Activated naive CD4-positive, alpha-beta T cell treated with anti-CD3 and anti-CD28 coated beads for 36 hours (primary cell): ENCODE measurements at regions of chr20 and their contacts with region 1.

Region 1: GRCh38 chr20:53547664-53548239 is 45.9 kb downstream of the ZNF217 start:
- DNase-seq: peak; percentile 70
- H3K4me3 Mint-ChIP-seq: no peak overlapping the region
- H3K27ac Mint-ChIP-seq: no peak overlapping the region
- H3K4me1 Mint-ChIP-seq: peaks cover 2% of the 10 kb centered on the region
- H3K27me3 Mint-ChIP-seq: no peaks in the 10 kb centered on the region

Region 2: DNA sequence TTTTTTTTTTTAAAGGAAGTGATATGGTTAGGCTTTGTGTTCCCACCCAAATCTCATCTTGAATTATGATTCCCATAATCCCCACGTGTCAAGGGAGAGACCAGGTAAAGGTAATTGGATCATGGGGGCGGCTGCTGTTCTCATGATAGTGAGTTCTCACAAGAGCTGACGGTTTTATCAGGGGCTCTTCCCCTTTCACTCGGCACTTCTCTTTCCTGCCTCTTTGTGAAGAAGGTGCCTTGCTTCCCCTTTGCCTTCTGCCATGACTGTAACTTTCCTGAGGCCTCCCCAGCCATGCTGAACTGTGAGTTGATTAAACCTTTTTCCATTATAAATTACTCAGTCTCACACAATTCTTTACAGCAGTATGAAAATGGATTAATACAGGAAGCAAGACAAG is 1420.4 kb before region 1 on chr20:
- CTCF ChIA-PET with region 1: no interaction called
- intact Hi-C with region 1: loop called (anchors 1 kb)
- DNase-seq: no peak
- H3K4me3 Mint-ChIP-seq: no peak overlapping the region
- H3K27ac Mint-ChIP-seq: no peak overlapping the region
- H3K4me1 Mint-ChIP-seq: no peaks in the 10 kb centered on the region
- H3K27me3 Mint-ChIP-seq: no peaks in the 10 kb centered on the region

Region 3: DNA sequence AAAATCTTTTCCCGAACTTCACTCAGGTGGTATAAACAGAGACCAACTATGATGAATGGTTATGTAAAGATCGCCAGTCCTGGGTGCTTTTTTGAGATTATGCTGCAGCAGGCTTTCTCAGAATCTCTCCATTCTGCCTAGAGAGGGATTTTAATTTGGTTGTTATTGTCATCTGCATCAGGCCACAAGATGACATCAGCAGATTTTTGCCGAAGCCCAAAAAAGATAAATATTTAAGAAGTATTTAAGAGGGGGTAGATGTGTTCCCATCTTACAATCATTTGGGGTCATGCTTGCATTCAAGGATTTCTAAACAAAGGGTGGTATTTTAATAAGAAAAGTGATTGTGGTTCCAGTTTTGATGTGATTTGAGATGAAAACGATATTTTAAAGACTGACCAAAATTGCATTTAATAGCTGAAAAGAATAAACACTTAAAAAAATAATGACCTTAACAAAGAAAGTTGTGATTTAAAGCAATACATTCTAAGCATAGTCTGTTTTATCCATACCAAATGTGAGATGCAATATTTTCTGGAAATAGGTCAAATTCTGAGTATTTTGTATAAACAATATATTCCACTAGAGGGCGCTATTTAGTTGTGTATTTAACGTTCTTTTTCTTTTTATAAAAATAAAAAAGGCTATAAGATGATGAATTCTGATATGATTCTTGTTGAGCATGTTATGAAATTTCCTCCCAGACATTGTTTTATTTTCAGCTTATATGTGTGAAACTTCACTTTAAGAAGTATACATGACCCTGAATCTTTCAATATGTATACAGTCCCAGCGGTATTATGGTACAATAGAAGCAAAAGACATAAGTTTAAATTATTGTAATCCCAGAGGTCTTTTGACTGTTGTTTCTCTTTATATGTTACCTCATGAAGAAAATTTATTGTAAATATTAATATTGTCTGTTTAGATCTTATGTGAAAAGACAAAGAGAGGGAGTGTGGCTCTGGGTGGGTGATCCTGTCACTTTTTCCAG is 1305.2 kb before region 1 on chr20:
- CTCF ChIA-PET with region 1: interaction called, 5 read pairs
- intact Hi-C with region 1: loop called (anchors 2 kb)
- DNase-seq: no peak
- H3K4me3 Mint-ChIP-seq: no peak overlapping the region
- H3K27ac Mint-ChIP-seq: no peak overlapping the region
- H3K4me1 Mint-ChIP-seq: no peaks in the 10 kb centered on the region
- H3K27me3 Mint-ChIP-seq: no peaks in the 10 kb centered on the region

Region 4: DNA sequence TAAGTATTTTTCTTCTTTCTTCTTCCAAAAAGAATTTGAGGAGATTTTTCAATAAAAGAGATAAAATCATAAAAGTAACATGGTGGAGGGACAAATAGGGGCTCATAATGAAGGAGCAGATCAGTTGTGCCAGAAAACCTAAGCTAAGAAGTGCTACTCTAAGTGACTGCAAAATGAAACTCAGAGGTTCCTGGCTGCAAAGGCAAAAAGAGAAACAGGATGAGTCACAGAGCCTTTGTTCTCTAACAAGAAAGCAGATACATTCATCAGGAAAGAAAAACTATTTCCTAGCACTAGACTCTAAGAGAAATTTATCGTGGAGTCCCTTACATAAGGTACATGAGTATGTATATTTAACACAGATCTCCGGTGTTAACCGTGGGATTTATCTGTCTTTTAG is 525.8 kb before region 1 on chr20:
- CTCF ChIA-PET with region 1: no interaction called
- intact Hi-C with region 1: loop called (anchors 10 kb)
- DNase-seq: peak; percentile 64
- H3K4me3 Mint-ChIP-seq: peak overlapping the region; percentile 29
- H3K27ac Mint-ChIP-seq: peak overlapping the region; percentile 93
- H3K4me1 Mint-ChIP-seq: peaks cover 85% of the 10 kb centered on the region
- H3K27me3 Mint-ChIP-seq: no peaks in the 10 kb centered on the region

Region 5: GRCh38 chr20:53413186-53413631 is 134.5 kb before region 1 on chr20:
- CTCF ChIA-PET with region 1: interaction called, 4 read pairs
- intact Hi-C with region 1: loop called (anchors 2 kb)
- DNase-seq: peak; percentile 73
- H3K4me3 Mint-ChIP-seq: peak overlapping the region; percentile 8
- H3K27ac Mint-ChIP-seq: no peak overlapping the region
- H3K4me1 Mint-ChIP-seq: peaks cover 12% of the 10 kb centered on the region
- H3K27me3 Mint-ChIP-seq: no peaks in the 10 kb centered on the region

Region 6: DNA sequence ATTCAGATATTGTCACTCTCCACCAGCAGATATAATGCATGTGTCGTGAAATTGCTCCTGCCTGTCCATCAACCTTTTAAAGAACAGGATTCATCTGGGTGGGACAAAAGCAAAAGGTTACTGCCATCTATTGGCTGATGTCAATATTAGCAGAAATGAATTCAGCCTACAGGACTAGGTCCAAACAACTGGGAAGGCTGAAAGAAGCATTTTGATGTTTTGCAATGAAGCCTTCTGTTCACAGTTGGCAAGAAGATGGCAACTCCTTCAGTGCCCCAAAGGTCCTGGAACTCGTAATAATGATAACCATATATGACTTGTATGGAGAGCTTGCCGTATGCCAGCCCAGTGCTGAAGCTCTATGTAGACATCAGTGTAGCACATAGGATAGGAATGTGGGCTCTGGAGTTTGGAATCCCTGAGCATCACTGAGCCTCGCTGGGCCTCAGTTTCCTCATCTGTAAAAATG is 515.1 kb after region 1 on chr20:
- CTCF ChIA-PET with region 1: no interaction called
- intact Hi-C with region 1: loop called (anchors 5 kb)
- DNase-seq: no peak
- H3K4me3 Mint-ChIP-seq: no peak overlapping the region
- H3K27ac Mint-ChIP-seq: no peak overlapping the region
- H3K4me1 Mint-ChIP-seq: peaks cover 8% of the 10 kb centered on the region
- H3K27me3 Mint-ChIP-seq: no peaks in the 10 kb centered on the region